ENCODE measurements at regions of chr2 and their contacts with region 1.

Region 1: DNA sequence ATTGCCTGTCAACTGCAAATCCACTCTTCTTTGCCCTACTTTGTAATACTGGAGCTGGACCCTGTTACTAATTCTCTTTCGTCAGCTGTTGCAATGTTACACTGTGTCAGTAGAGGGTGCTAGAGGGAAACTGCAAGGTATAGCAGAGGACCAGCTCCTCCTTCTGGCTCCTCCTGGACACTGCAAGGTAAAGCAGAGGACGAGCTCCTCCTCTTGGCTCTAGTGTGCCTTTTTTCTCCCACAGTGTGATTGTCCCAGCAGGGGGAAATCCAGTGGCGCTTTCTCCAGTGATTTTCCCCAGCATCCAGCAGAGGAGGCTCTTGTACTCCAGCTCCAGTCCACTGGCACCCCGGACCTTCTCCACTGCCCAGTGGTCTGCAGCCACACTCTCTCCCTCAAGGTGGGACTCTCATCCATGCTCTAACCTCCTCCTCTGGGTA is 95.6 kb downstream of the CAPN13 start:
- DNase-seq: peak; percentile 85
- ATAC-seq: peak; percentile 85 to 93
- H3K4me3 ChIP-seq: no peak overlapping the region
- H3K27ac ChIP-seq: no peak overlapping the region
- H3K4me1 ChIP-seq: peaks cover 9% of the 10 kb centered on the region
- H3K27me3 ChIP-seq: no peaks in the 10 kb centered on the region
- CTCF ChIP-seq: peak; percentile 99

Region 2: GRCh38 chr2:30165050-30165520 is 546.6 kb before region 1 on chr2:
- intact Hi-C with region 1: loop called (anchors 10 kb)
- DNase-seq: no peak
- ATAC-seq: peak; percentile 92
- H3K4me3 ChIP-seq: no peak overlapping the region
- H3K27ac ChIP-seq: no peak overlapping the region
- H3K4me1 ChIP-seq: no peaks in the 10 kb centered on the region
- H3K27me3 ChIP-seq: no peaks in the 10 kb centered on the region
- CTCF ChIP-seq: peak; percentile 90

Region 3: DNA sequence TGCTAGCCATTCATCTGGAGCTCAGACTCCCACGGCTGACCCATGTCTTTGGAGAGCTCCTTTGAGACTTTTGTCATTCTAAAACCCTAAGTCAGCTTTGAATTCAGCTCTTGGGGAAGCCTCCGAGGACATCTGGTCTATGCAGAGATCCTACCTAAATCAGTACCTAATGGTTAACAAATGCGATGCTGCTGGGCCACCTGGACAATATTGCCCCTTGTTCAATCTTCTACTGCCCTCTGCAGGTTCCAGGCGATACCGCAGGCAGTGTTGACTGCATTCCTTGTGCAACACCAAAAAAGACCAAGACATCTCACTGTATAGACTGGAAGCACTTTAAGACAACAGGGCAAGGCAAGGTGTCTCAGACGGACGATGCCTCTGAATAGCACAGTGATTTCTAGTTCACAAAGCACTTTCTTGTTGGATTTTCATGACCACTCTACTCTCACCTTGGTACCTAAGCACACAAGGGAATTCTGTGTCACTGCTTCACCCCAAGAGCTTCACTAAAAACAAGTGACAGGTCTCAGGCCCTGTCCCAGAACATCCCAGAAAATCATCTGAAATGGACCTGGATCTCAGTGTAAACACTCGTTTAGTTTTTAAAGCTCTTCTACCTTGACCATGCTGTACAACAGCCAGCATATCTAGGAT is 622.0 kb after region 1 on chr2:
- intact Hi-C with region 1: loop called (anchors 10 kb)
- DNase-seq: peak; percentile 78
- ATAC-seq: peak; percentile 82 to 88
- H3K4me3 ChIP-seq: no peak overlapping the region
- H3K27ac ChIP-seq: no peak overlapping the region
- H3K4me1 ChIP-seq: peaks cover 2% of the 10 kb centered on the region
- H3K27me3 ChIP-seq: no peaks in the 10 kb centered on the region
- CTCF ChIP-seq: peak; percentile 95

Region 4: DNA sequence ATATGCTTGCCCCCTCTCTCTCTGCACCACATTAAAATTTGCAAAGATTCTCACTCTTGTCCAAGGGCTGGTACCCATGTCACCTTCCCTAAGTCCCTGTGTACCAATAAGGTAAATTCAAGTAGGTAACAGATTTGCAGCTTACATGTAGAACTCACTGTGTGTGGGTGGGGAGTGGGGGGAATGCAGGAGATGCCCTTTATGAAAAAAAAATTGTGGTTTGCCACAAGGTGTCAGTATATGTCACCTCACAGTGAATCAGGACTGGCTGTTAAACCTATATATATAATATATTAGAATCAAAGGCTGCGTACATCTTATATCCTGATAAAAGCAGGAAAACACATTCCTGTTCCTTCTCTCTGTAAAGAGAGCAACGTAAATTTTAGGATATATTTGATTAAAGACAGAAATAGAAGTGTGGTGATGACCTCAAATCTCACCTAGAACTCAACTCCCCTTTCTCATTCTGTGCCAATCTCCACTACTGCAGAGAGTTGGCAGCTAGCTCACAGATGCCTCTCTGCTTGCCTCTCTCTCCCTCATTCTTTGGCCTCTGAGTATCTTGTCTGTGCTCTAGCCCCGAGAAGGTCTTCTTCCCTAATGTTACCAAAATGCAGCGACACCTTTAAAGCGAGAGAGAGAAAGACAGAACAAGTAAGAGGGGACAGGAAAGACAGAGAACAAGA is 702.3 kb after region 1 on chr2:
- intact Hi-C with region 1: no loop called
- DNase-seq: no peak
- ATAC-seq: peak in 1 of 2 donors; percentile 52
- H3K4me3 ChIP-seq: no peak overlapping the region
- H3K27ac ChIP-seq: no peak overlapping the region
- H3K4me1 ChIP-seq: no peaks in the 10 kb centered on the region
- H3K27me3 ChIP-seq: no peaks in the 10 kb centered on the region
- CTCF ChIP-seq: no peak